Heart left ventricle (tissue), 16 donors: ENCODE measurements at regions of chr11 and their contacts with region 1.

Region 1: GRCh38 chr11:101061606-101062005 is 68.0 kb downstream of the PGR start:
- DNase-seq: no peak
- ATAC-seq: peak; percentile 82 to 89 (median 86)
- H3K4me3 ChIP-seq: no peak overlapping the region
- H3K27ac ChIP-seq: peak overlapping the region in 9 of 12 donors; percentile 2 to 75 (median 41)
- H3K4me1 ChIP-seq: peaks cover 0 to 40% (median 8%) of the 10 kb centered on the region in 12 donors
- H3K27me3 ChIP-seq: no peaks in the 10 kb centered on the region
- CTCF ChIP-seq: no peak
- POLR2A ChIP-seq: no peak

Region 2: DNA sequence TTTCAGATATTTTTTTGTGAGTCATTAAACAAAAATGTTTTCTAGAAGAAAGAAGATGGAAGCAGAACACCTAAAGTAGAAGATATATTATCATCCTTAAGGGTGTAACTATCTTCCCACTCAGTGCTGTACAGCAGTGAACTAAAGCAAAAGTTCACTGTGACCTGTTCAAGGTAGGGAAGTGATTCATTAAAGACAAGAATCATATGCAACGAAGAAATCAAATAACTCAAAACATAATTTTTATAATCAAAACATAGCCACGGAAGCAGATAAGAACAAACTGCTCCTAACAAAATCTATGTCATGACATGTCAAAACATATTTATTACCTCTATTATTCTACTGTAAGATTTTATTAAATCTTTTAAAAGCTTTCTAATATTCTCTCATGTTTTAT is 16.8 kb after region 1 on chr11:
- intact Hi-C with region 1: no loop called
- DNase-seq: no peak
- ATAC-seq: no peak
- H3K4me3 ChIP-seq: no peak overlapping the region
- H3K27ac ChIP-seq: no peak overlapping the region
- H3K4me1 ChIP-seq: no peaks in the 10 kb centered on the region
- H3K27me3 ChIP-seq: no peaks in the 10 kb centered on the region
- CTCF ChIP-seq: no peak
- POLR2A ChIP-seq: no peak

Region 3: DNA sequence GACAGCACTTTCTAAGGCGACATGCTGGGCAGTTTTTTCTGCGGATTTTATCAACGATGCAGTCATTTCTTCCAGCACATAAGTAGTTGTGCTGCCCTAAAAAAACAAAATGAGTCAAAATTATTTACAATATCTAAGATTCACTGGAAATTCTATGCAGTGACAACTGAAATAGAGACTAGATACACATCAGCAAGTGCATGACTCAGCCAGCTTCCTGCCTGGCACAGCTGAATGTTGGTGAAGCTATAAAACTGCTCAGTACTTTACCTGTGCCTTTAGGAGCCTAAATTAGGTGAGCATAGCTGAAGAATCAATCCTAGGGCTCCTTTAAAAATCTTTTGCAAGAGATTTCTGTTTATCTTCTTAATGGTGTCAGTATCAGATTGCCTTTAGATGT is 30.2 kb after region 1 on chr11:
- intact Hi-C with region 1: loop called in 1 of 10 experiments (anchors 5 kb)
- DNase-seq: no peak
- ATAC-seq: no peak
- H3K4me3 ChIP-seq: no peak overlapping the region
- H3K27ac ChIP-seq: no peak overlapping the region
- H3K4me1 ChIP-seq: peaks cover 0 to 34% (median 8%) of the 10 kb centered on the region in 12 donors
- H3K27me3 ChIP-seq: no peaks in the 10 kb centered on the region
- CTCF ChIP-seq: no peak
- POLR2A ChIP-seq: no peak

Region 4: GRCh38 chr11:101100601-101101000 is 39.0 kb after region 1 on chr11:
- intact Hi-C with region 1: loop called in 1 of 10 experiments (anchors 5 kb)
- DNase-seq: no peak
- ATAC-seq: no peak
- H3K4me3 ChIP-seq: no peak overlapping the region
- H3K27ac ChIP-seq: peak overlapping the region in 1 of 12 donors; percentile 3
- H3K4me1 ChIP-seq: peaks cover 0 to 40% (median 9%) of the 10 kb centered on the region in 12 donors
- H3K27me3 ChIP-seq: no peaks in the 10 kb centered on the region
- CTCF ChIP-seq: no peak
- POLR2A ChIP-seq: no peak